CD14-positive monocyte (primary cell): ENCODE measurements at regions of chr2 and their contacts with region 1.

Region 1: DNA sequence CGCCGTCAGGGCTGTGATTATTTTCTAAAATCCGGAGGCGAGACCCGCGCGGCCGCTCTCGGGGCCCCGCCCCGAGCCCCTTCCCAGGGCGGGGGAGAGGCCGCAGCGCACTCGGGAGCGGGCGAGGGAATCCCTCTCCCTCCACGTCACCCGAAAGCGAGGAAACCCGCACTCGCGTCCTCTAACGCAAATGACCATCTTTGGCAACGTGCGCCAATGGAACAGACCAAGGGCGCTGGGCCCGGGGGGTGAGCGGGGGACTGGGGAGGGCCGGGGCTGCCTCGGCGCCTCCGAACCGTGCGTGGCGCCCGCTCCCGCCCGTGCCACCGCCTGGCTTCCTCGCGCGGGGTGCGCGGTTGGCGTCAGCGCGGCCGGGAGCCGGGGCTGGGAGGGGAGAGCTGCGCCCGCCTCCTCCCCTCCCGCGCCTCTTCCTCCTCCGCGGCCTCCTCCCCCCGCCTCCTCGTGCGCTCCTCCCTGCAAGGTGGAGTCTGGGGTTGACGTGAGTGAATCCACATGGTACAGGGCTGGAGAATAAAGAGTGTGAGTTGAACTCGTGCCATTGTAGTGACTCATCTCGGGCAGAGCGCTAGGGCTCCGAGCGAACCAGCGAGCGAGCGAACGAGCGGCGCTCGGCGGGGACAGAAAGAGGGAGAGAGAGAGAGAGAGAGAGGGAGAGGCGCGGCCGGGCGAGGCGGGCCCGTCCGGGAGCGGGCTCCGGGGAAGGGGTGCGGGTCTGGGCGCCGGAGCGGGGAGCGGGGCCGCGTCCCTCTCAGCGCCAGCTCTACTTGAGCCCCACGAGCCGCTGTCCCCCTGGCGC is at the start of gene FOSL2:
- DNase-seq: peak; percentile 97 to 99 (median 99)
- H3K4me3 ChIP-seq: peak within 1 kb of the TSS; percentile 92 to 98 (median 97)
- H3K4me3 Mint-ChIP-seq: peak within 1 kb of the TSS; percentile 90 to 92
- H3K27ac ChIP-seq: peak within 1 kb of the TSS; percentile 97
- H3K27ac Mint-ChIP-seq: peak within 1 kb of the TSS in 6 of 7 donors; percentile 97 to 99 (median 98)
- H3K4me1 ChIP-seq: peaks cover 23 to 37% of the 10 kb centered on the region in 2 donors
- H3K4me1 Mint-ChIP-seq: peaks cover 21% of the 10 kb centered on the region
- H3K27me3 ChIP-seq: no peaks in the 10 kb centered on the region
- H3K27me3 Mint-ChIP-seq: peaks cover 1 to 5% (median 3%) of the 10 kb centered on the region in 3 donors
- CTCF ChIP-seq: no peak
- polyA plus RNA-seq, gene FOSL2: 24.8 to 270 (median 28.6) TPM

Region 2: GRCh38 chr2:27703638-27704341 is 688.7 kb before region 1 on chr2:
- intact Hi-C with region 1: loop called in 1 of 2 experiments (anchors 5 kb)
- DNase-seq: peak; percentile 79 to 90 (median 85)
- H3K4me3 ChIP-seq: no peak overlapping the region
- H3K4me3 Mint-ChIP-seq: no peak overlapping the region
- H3K27ac ChIP-seq: no peak overlapping the region
- H3K27ac Mint-ChIP-seq: peak overlapping the region in 3 of 7 donors; percentile 10 to 68 (median 24)
- H3K4me1 ChIP-seq: peaks cover 22 to 25% of the 10 kb centered on the region in 2 donors
- H3K4me1 Mint-ChIP-seq: peaks cover 26% of the 10 kb centered on the region
- H3K27me3 ChIP-seq: no peaks in the 10 kb centered on the region
- H3K27me3 Mint-ChIP-seq: peaks cover 0 to 1% (median 0%) of the 10 kb centered on the region in 3 donors
- CTCF ChIP-seq: peak; percentile 91

Region 3: DNA sequence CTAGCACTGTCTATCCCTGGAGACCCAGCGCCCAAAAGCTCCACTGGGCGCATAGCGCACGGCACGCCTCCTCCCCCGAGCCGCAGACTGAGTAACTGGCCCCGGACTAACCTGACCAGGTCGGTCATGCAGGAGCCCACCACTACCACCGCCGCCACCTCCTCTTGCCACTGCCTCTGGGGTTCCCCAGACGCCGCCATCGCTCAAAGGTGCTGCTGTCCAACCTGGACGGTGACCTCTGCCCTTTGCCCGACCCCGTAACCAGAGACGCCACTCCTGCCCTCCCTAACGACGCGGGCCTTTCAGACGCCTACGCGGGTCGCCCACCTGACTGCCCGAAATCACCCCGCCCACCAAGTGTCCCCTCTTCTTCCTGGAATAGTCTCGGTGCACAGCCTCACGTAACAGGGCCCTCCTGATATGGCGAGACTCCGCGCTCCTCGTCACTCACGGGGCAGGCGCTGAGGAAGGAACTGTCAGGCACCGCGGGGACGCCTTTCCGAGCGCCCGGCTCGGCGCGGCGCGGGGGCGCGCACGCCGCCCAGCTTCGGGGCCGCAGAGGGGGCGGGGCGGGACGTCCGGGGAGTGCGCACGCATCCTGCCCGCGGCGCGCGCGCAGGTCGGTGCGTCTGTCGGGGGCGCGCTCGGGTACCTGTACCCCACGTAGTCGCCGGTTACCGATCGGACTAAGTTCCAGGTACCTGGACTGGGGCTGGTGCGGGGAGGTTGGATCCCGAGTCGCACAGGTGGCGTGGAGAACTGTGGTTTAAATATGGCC is 502.2 kb before region 1 on chr2 and contains the starts of genes BABAM2 and RBKS:
- intact Hi-C with region 1: loop called (anchors 10 kb)
- DNase-seq: peak; percentile 86 to 90 (median 86)
- H3K4me3 ChIP-seq: peak within 1 kb of the TSS; percentile 79 to 96 (median 87)
- H3K4me3 Mint-ChIP-seq: peak within 1 kb of the TSS; percentile 95 to 98
- H3K27ac ChIP-seq: peak within 1 kb of the TSS; percentile 99 to 100
- H3K27ac Mint-ChIP-seq: peak within 1 kb of the TSS; percentile 100
- H3K4me1 ChIP-seq: peaks cover 53 to 75% of the 10 kb centered on the region in 2 donors
- H3K4me1 Mint-ChIP-seq: peaks cover 69% of the 10 kb centered on the region
- H3K27me3 ChIP-seq: no peaks in the 10 kb centered on the region
- H3K27me3 Mint-ChIP-seq: peaks cover 0 to 4% (median 2%) of the 10 kb centered on the region in 3 donors
- CTCF ChIP-seq: no peak
- polyA plus RNA-seq, gene BABAM2: 33.2 to 52.8 (median 49.3) TPM
- polyA plus RNA-seq, gene RBKS: 3.9 to 39.1 (median 4.3) TPM

Region 4: DNA sequence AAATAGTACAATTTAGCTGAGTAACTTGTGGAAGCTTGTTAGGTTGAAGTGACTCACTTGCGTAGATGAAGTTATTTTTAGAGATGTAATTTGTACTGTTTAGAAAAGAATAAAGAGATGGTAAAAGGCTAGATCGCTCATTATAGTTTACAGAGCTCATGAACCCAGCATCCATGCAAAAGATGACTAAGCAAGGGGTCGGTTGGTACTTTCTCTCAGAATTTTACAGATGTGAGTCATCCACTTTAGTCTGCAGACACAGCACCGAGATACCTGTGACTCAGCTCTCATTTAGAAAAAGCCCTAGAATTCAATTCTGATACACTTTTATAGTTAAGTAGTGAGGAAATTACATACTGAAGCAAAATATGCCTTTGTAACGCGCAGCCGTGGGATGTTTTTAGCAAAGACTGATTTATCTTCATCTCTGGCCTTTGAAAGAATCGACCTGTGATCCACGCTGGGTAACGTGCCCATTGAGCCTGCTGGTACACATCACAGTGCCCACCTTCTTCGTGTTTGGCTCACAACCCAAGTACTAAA is 116.4 kb before region 1 on chr2:
- intact Hi-C with region 1: loop called in 1 of 2 experiments (anchors 10 kb)
- DNase-seq: peak; percentile 23 to 84 (median 48)
- H3K4me3 ChIP-seq: no peak overlapping the region
- H3K4me3 Mint-ChIP-seq: no peak overlapping the region
- H3K27ac ChIP-seq: no peak overlapping the region
- H3K27ac Mint-ChIP-seq: peak overlapping the region in 1 of 7 donors; percentile 44
- H3K4me1 ChIP-seq: peaks cover 19 to 26% of the 10 kb centered on the region in 2 donors
- H3K4me1 Mint-ChIP-seq: peaks cover 37% of the 10 kb centered on the region
- H3K27me3 ChIP-seq: no peaks in the 10 kb centered on the region
- H3K27me3 Mint-ChIP-seq: peaks cover 0 to 2% (median 0%) of the 10 kb centered on the region in 3 donors
- CTCF ChIP-seq: no peak

Region 5: DNA sequence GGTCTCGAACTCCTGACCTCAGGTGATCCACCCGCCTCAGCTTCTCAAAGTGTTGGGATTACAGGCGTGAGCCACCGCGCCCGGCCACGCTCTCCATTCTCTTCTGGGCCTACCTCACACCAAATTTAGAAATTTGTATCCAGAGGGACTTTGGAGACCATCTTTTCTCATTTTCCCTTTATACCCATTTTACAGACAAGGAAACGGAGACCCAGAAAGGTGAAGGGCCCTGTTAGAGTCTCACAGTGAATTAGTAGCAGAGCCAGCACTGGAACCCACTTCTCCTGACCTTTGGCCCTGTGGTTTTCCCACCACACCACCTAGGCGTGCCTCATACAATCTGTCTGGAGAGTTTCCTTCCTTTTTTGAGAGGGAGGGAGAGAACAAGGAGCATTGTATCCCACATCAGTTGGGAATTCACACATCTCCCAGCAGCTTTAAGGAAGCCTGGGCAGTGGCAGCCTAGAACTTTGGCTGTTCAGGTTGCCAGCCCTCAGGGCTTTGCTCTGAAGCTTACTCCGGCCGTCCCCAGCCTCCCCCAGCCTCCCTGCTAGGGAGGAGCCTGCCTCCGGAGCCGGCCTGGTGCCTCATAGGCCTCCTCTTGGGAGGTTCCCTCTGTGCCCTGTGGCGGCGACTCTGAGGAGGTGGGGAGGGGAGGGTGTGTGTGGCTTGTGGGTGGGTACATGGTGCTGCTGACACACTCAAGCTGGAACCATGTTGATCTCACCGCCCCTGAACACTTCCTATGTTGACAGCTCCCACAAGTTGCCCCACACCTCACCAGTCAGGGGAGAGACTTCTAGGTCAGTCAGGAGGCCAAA is 14.0 kb after region 1 on chr2:
- intact Hi-C with region 1: loop called (anchors 2 kb)
- DNase-seq: peak; percentile 90 to 98 (median 95)
- H3K4me3 ChIP-seq: peak overlapping the region in 1 of 3 experiments; percentile 33
- H3K4me3 Mint-ChIP-seq: peak overlapping the region; percentile 39 to 42
- H3K27ac ChIP-seq: peak overlapping the region; percentile 92 to 93
- H3K27ac Mint-ChIP-seq: peak overlapping the region; percentile 94 to 97 (median 95)
- H3K4me1 ChIP-seq: peaks cover 87 to 89% of the 10 kb centered on the region in 2 donors
- H3K4me1 Mint-ChIP-seq: peaks cover 96% of the 10 kb centered on the region
- H3K27me3 ChIP-seq: no peaks in the 10 kb centered on the region
- H3K27me3 Mint-ChIP-seq: peaks cover 0 to 2% (median 1%) of the 10 kb centered on the region in 3 donors
- CTCF ChIP-seq: peak; percentile 21